ENCODE measurements at regions of chr18 and their contacts with region 1.

Region 1: GRCh38 chr18:55395799-55396198 is 192.2 kb downstream of the TCF4 start:
- DNase-seq: no peak
- ATAC-seq: no peak
- H3K4me3 ChIP-seq: no peak overlapping the region
- H3K27ac ChIP-seq: no peak overlapping the region
- H3K4me1 ChIP-seq: no peaks in the 10 kb centered on the region
- H3K27me3 ChIP-seq: no peaks in the 10 kb centered on the region
- CTCF ChIP-seq: no peak

Region 2: GRCh38 chr18:55589625-55590291 is 194.0 kb after region 1 on chr18:
- intact Hi-C with region 1: no loop called
- DNase-seq: peak; percentile 98
- ATAC-seq: peak; percentile 100
- H3K4me3 ChIP-seq: peak overlapping the region; percentile 66
- H3K27ac ChIP-seq: peak overlapping the region; percentile 69
- H3K4me1 ChIP-seq: no peaks in the 10 kb centered on the region
- H3K27me3 ChIP-seq: no peaks in the 10 kb centered on the region
- CTCF ChIP-seq: no peak

Region 3: GRCh38 chr18:56575819-56576663 is 1180.2 kb after region 1 on chr18:
- intact Hi-C with region 1: loop called (anchors 5 kb)
- DNase-seq: no peak
- ATAC-seq: peak; percentile 81
- H3K4me3 ChIP-seq: no peak overlapping the region
- H3K27ac ChIP-seq: no peak overlapping the region
- H3K4me1 ChIP-seq: peaks cover 21% of the 10 kb centered on the region
- H3K27me3 ChIP-seq: no peaks in the 10 kb centered on the region
- CTCF ChIP-seq: peak; percentile 74